GM10248 (cell line): ENCODE measurements at regions of chr17 and their contacts with region 1.

Region 1: DNA sequence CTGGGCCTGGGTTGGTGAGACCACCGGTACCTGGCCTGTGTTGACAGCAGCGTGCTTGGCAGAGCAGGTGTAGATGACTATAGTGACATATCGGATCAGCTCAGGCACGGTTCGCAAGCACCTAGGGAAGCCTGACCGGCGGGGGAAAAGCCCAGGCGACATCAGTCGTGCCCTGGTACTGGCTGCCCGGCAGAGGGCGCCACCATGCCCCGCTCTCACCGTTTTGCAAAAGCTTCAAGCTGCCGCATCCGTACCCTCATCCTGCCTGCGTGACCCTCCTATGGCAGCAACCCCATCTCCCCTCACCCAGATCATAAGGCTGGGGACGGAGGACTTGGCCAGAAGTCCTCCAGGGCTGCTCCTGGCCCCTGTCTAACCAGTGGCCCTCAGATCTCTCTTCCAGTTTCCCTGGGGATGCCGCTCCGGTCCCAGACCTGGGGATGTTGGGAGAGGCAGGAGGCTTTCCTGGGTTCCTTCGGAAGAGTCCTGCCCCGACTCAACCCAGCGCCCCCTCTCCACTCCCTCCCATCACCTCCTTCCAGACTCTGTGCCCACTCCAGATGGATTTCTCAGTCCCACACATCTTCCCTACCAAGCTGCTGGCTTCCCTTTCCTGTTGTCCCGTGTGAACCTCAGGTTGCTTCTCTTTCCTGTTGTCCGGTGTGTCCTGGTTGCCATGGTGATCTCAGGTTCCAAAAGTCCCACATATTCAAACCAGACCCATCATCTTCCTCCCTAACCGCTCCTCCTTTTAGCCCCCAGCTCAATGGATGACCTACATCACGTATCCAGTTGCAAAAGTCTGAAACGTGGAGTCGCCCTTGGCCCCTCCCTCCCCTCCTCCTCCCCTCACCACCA is 13.7 kb downstream of the ALOX12B start:
- DNase-seq: peak; percentile 90
- CTCF ChIP-seq: peak; percentile 93

Region 2: GRCh38 chr17:8016632-8017478 is 57.0 kb before region 1 on chr17:
- CTCF ChIA-PET with region 1: interaction called, 11 read pairs
- POLR2A ChIA-PET with region 1: no interaction called
- DNase-seq: peak; percentile 55
- CTCF ChIP-seq: peak; percentile 72

Region 3: GRCh38 chr17:8100111-8100510 is 26.3 kb after region 1 on chr17:
- CTCF ChIA-PET with region 1: interaction called, 261 read pairs
- POLR2A ChIA-PET with region 1: no interaction called
- DNase-seq: no peak
- CTCF ChIP-seq: no peak

Region 4: GRCh38 chr17:8109661-8110464 is 36.0 kb after region 1 on chr17:
- CTCF ChIA-PET with region 1: interaction called, 86 read pairs
- POLR2A ChIA-PET with region 1: no interaction called
- DNase-seq: peak; percentile 87
- CTCF ChIP-seq: peak; percentile 93

Region 5: GRCh38 chr17:8345052-8345682 is 271.3 kb after region 1 on chr17:
- CTCF ChIA-PET with region 1: no interaction called
- POLR2A ChIA-PET with region 1: no interaction called
- DNase-seq: no peak
- CTCF ChIP-seq: no peak

Region 6: GRCh38 chr17:8435245-8436168 is 361.7 kb after region 1 on chr17 and contains the start of gene NDEL1:
- CTCF ChIA-PET with region 1: no interaction called
- POLR2A ChIA-PET with region 1: no interaction called
- DNase-seq: peak; percentile 99
- CTCF ChIP-seq: no peak